ENCODE measurements at regions of chr20 and their contacts with region 1.

Region 1: DNA sequence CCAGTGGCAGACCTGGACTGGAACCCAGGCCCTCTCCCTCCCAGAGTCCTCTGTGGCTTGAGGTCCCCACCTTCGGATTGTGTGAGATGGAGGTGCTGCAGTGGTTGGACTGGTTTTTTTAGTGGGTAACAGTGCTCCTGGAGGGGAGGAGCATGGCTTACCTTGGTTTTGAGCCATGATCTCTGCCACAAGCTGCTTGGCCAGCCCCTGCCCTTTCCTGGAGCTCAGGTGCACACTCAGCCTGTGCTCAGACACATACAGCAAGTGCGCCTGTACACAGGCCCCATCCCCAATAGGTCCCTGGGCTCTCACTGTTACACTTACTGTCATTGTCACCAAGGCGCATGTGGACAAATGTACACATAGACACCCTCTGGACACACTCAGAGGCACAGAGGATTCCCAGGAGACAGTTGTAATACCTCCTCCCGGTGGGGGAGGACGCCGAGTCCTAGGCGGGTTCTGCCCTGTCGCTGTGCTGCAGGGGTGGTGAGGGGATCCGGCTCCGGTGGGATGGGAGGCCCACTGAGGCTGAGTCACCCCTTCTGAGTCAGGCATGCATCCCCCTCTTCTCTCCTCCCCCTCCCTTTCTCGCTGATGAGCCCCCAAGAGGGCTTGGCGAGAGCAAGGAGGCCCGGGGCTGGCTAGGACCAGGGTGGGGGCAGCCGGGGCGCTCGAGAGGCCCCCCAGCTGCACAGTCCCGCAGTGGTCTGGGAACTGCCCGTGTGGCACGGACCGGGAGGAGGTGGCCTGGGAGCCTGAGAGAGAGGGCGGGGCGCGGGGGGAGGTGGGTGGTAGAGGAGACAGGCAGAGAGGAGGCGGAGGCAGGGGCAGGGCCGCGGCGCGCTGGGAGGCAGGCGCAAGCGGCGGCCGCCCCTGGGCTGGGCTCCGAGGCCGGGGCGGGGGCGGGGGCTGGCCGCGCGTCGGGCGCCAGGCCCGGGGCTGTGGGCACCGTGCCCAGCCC is 522 bp upstream of the EPB41L1 start:
- DNase-seq: peak; percentile 60 to 72
- ATAC-seq: peak; percentile 83 to 89
- H3K4me3 ChIP-seq: peak overlapping the region; percentile 80
- H3K27ac ChIP-seq: peak overlapping the region; percentile 87 to 94
- H3K4me1 ChIP-seq: peaks cover 64% of the 10 kb centered on the region
- CTCF ChIP-seq: no peak
- EP300 ChIP-seq: no peak
- POLR2A ChIP-seq: no peak
- RAD21 ChIP-seq: no peak

Region 2: DNA sequence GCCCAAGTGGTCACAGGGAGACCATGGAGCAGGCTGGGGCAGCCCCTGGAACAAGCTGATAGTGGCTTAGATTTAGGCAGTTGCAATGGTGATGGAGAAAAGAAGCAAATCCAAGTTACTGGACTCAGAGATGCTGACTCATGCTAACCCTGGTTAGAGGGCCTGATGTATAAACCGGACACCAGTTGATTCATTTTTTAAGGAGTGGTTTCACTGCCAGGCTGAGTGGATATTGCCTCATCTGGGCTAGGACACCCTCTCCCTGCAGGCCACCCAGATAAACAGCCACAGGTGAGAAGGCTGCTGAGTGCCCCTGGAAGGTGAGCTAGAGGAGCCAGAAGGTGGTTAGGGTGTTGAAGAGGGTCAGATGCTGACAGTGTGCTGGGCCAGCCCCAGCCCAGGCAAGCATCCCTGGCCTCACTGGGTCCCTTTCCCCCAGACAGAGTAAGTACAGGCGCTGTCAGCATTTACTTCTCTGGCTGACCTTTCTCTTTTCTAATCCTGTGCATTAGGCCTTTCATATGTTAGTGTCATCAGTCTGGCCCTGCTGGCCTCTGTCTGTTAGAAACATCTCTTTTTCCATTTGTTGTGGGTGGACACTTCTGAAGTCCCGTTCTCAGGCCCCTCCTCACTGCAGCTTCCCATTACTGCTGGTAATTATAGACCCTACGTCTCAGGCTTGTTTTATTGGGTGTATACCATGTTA is 14.0 kb after region 1 on chr20:
- CTCF ChIA-PET with region 1: interaction called, 54 read pairs
- POLR2A ChIA-PET with region 1: no interaction called
- DNase-seq: peak; percentile 81 to 82
- ATAC-seq: peak; percentile 88 to 92
- H3K4me3 ChIP-seq: no peak overlapping the region
- H3K27ac ChIP-seq: peak overlapping the region; percentile 88 to 98
- H3K4me1 ChIP-seq: peaks cover 45% of the 10 kb centered on the region
- CTCF ChIP-seq: no peak
- EP300 ChIP-seq: no peak
- POLR2A ChIP-seq: no peak
- RAD21 ChIP-seq: no peak

Region 3: DNA sequence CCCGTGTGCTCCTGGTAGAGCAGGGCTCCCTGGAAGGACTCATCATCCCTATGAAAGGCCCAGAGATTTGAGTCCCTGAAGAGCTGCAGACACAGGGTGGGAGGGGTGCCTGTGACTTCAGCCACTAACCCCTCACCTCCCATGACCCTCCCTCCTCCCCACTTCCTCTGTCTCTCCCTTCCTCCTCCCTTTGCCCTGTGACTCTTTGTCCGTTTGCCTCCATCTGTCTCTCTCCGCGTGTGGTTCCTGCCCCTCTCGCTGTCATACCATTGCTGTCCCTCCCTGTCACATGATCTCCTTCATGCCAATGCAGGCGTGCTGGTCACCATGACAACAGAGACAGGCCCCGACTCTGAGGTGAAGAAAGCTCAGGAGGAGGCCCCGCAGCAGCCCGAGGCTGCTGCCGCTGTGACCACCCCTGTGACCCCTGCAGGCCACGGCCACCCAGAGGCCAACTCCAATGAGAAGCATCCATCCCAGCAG is 19.5 kb after region 1 on chr20:
- CTCF ChIA-PET with region 1: interaction called, 54 read pairs
- POLR2A ChIA-PET with region 1: no interaction called
- DNase-seq: no peak
- ATAC-seq: no peak
- H3K4me3 ChIP-seq: no peak overlapping the region
- H3K27ac ChIP-seq: no peak overlapping the region
- H3K4me1 ChIP-seq: peaks cover 25% of the 10 kb centered on the region
- CTCF ChIP-seq: no peak
- EP300 ChIP-seq: no peak
- POLR2A ChIP-seq: no peak
- RAD21 ChIP-seq: no peak

Measured in A549 (cell line).